GM12878 (cell line): ENCODE measurements at regions of chr7 and their contacts with region 1.

Region 1: DNA sequence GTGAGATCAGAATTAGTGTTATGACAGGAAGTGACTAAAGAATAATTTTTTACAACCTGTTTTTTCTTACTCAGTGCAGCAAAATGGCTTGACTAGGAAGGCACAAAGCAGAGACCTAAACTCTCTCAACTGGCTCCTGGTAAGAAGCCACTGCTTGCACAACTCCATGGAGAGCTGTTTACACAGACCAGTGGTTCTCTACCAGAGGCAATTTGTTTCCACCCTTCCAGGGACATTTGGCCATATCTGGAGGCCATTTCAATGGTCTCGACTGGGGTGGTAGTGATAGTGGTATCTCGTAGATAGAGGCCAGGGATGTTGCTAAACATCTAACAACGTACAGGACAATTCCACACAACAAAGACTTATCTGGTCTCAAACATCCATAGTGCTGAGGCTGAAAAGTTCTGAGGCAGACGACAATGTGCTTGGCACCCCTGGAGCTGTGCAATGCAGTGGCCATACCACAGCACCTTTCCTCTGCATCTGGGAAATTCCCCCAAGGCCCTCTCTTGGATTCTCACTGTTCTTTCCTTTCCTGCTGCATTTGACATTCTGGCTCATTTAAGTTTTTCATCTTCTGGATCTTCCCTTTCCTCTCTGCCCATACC is 105.4 kb upstream of the LAMB4 start:
- DNase-seq: no peak
- ATAC-seq: peak; percentile 37
- H3K4me3 ChIP-seq: no peak overlapping the region
- H3K27ac ChIP-seq: no peak overlapping the region
- H3K4me1 ChIP-seq: no peaks in the 10 kb centered on the region
- H3K27me3 ChIP-seq: no peaks in the 10 kb centered on the region
- CTCF ChIP-seq: no peak
- EP300 ChIP-seq: no peak
- POLR2A ChIP-seq: no peak
- RAD21 ChIP-seq: no peak

Region 2: DNA sequence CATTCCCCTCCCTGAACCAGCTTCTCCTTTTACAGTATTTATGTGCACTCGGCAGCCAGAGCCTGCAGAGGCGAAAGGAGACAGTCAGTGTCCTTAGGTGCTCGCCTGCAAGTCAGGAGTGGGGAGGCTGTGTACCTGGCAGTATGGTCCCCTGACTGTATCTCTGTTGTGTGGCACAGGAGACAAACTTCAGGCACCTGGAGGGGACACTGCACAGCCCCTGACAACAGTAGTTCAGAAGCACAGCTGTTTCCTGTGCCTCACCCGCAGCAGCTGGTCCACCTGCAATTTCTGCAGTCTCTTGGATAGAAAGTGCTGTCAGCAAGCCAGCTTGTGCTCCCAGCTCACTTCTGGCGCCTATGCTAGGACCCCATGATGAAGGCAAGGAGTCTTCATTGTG is 32.0 kb before region 1 on chr7:
- CTCF ChIA-PET with region 1: no interaction called
- POLR2A ChIA-PET with region 1: no interaction called
- RAD21 ChIA-PET with region 1: no interaction called
- SMC1A ChIA-PET with region 1: no interaction called
- in situ Hi-C with region 1: no loop called
- intact Hi-C with region 1: no loop called
- DNase-seq: no peak
- ATAC-seq: peak; percentile 69
- H3K4me3 ChIP-seq: no peak overlapping the region
- H3K27ac ChIP-seq: no peak overlapping the region
- H3K4me1 ChIP-seq: peaks cover 3% of the 10 kb centered on the region; the same call in 1 of the 2 replicates
- H3K27me3 ChIP-seq: no peaks in the 10 kb centered on the region
- CTCF ChIP-seq: no peak
- EP300 ChIP-seq: no peak
- POLR2A ChIP-seq: no peak
- RAD21 ChIP-seq: no peak

Region 3: DNA sequence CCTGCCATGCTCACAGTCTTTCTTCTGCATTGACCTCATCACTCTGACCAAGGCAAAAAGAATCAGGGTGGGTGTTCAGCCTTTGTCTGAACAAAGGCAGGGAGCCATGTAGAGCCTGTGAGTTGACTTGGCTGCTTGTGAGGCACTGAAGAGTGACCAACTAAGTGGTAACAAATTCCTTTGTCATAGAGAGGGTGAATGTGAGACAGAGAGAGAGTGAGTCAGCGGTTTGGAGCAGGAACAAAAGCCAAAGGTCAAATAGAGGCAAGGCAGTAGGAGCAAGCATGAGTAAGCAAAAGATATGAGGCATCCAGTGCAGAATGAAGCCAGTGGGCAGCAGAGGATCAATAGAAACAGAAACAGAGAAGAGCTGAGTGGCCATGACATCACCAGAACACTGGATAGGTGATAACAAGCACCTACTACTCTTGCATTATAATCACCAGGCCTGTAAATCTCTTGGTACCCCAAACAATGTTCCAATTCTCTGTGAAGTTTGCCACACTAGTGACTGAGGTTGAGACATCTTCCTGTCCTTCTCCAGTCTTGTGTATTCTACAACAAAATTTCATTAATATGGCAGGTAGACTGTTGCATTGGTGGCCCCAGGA is 10.8 kb after region 1 on chr7:
- CTCF ChIA-PET with region 1: interaction called, 6 read pairs
- POLR2A ChIA-PET with region 1: no interaction called
- RAD21 ChIA-PET with region 1: no interaction called
- SMC1A ChIA-PET with region 1: interaction called, 14 read pairs
- in situ Hi-C with region 1: no loop called
- intact Hi-C with region 1: no loop called
- DNase-seq: peak; percentile 26
- ATAC-seq: peak; percentile 96
- H3K4me3 ChIP-seq: no peak overlapping the region
- H3K27ac ChIP-seq: no peak overlapping the region
- H3K4me1 ChIP-seq: 0 out of 2 replicates have a peak, but pooled peaks cover 3% of the 10 kb centered on the region
- H3K27me3 ChIP-seq: no peaks in the 10 kb centered on the region
- CTCF ChIP-seq: no peak; a peak in 1 of 6 replicates
- EP300 ChIP-seq: 0 out of 4 replicates have a peak, but pooled peaks of 1 of the 2 experiments have one; percentile 3
- POLR2A ChIP-seq: no peak
- RAD21 ChIP-seq: 0 out of 2 replicates have a peak, but pooled peaks have one; percentile 11

Region 4: DNA sequence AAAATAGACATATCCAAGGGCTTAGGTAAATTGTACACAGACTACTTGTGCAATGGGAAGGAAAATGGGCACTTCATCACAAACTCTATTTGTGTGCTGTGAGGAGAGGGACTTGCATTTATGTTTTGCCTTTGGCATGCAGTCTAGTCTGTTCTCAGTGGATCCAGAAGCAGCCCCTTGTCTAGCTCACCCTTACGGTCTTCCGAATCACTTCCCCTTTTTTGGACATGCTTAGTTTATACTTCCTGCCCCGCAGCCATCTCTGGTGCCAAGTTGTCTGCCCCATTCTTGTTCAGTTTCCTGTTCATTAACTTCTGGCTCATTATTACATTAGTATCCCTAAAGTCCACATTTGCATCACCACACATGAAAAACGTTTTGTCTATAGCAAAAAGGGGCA is 59.0 kb after region 1 on chr7:
- CTCF ChIA-PET with region 1: no interaction called
- POLR2A ChIA-PET with region 1: interaction called, 3 read pairs
- RAD21 ChIA-PET with region 1: no interaction called
- SMC1A ChIA-PET with region 1: interaction called, 3 read pairs
- in situ Hi-C with region 1: no loop called
- intact Hi-C with region 1: loop called (anchors 10 kb)
- DNase-seq: no peak
- ATAC-seq: peak; percentile 97
- H3K4me3 ChIP-seq: no peak overlapping the region
- H3K27ac ChIP-seq: no peak overlapping the region
- H3K4me1 ChIP-seq: peaks cover 7% of the 10 kb centered on the region
- H3K27me3 ChIP-seq: no peaks in the 10 kb centered on the region
- CTCF ChIP-seq: no peak
- EP300 ChIP-seq: no peak
- POLR2A ChIP-seq: no peak
- RAD21 ChIP-seq: no peak